ENCODE measurements at regions of chr22 and their contacts with region 1.

Region 1: GRCh38 chr22:50627642-50628542 is at the start of gene ARSA:
- DNase-seq: peak; percentile 80 to 85 (median 83)
- H3K4me3 ChIP-seq: peak within 1 kb of the TSS; percentile 58 to 83 (median 76)
- H3K27ac ChIP-seq: peak within 1 kb of the TSS; percentile 20 to 43
- H3K4me1 ChIP-seq: peaks cover 3 to 33% (median 19%) of the 10 kb centered on the region in 4 experiments
- H3K27me3 ChIP-seq: no peaks in the 10 kb centered on the region

Region 2: GRCh38 chr22:50674606-50675549 is 47.0 kb after region 1 on chr22:
- CTCF ChIA-PET with region 1: interaction called, 3 read pairs
- POLR2A ChIA-PET with region 1: interaction called, 10 read pairs
- DNase-seq: peak in 2 of 3 donors; percentile 41 to 58
- H3K4me3 ChIP-seq: peak overlapping the region; percentile 44 to 77 (median 73)
- H3K27ac ChIP-seq: no peak overlapping the region
- H3K4me1 ChIP-seq: peaks cover 0 to 58% (median 44%) of the 10 kb centered on the region in 4 experiments
- H3K27me3 ChIP-seq: no peaks in the 10 kb centered on the region

Measured in common myeloid progenitor, CD34-positive (primary cell).